Activated CD4-positive, alpha-beta memory T cell treated with anti-CD3 and anti-CD28 coated beads, Interleukin-2, amount 10 ng/mL, durations not matched to agents 7 days and 5 days (primary cell): ENCODE measurements at regions of chr18 and their contacts with region 1.

Region 1: GRCh38 chr18:2932247-2933181 is 80.4 kb downstream of the LPIN2 start:
- DNase-seq: peak; percentile 36
- H3K4me3 Mint-ChIP-seq: no peak overlapping the region
- H3K27ac Mint-ChIP-seq: peak overlapping the region; percentile 20
- H3K4me1 Mint-ChIP-seq: peaks cover 28% of the 10 kb centered on the region
- H3K27me3 Mint-ChIP-seq: no peaks in the 10 kb centered on the region

Region 2: DNA sequence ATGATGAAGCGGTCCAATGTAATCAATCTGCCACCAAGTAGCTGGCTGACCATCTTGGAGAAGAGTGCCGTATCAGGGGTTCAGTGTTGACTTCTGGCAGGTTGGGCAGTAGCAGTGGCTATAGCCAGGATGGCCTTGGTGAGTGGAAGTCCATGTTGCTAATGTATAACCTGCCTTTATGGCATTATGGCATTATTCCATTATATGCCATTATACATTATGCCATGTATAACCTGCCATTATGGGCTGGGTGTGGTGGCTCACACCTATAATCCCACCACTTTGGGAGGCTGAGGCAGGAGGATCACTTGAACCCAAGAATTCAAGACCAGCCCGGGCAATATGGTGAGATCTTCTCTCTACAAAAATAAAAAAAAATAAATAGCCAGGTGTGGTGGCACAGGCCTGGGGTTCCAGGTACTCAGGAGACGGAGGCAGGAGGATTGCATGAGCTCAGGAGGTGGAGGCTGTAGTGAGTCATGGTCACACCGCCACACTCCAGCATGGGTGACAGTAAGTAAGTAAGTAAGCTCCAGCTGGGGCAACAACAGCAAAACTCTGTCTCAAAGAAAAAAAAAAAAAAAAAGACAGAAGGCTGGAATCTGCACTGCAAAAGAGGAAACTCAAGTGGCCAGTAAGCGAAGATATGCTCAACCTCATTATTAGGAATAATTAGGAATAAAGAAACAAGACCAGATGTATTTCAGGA is 110.1 kb before region 1 on chr18:
- CTCF ChIA-PET with region 1: no interaction called
- POLR2A ChIA-PET with region 1: no interaction called
- DNase-seq: no peak
- H3K4me3 Mint-ChIP-seq: no peak overlapping the region
- H3K27ac Mint-ChIP-seq: no peak overlapping the region
- H3K4me1 Mint-ChIP-seq: no peaks in the 10 kb centered on the region
- H3K27me3 Mint-ChIP-seq: peaks cover 5% of the 10 kb centered on the region

Region 3: DNA sequence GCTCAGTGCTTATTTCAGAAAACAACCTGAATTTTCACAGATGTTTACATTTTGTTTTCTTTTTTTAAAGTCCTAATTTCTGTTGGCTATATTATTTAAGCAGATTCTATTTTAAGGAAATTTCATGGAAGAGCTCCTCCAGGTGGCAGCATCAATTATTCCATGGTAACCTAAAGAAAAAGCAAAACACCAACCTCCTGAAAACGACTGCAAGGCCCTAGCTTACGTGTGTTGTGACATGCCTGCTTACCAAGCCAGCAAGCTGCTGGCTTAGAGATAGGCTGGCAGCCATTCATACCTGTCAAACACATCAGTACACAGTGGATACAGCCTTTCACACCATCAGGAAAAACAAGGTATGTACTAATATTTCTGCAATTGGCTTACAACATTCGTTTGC is 15.5 kb after region 1 on chr18:
- CTCF ChIA-PET with region 1: interaction called, 14 read pairs
- POLR2A ChIA-PET with region 1: interaction called, 4 read pairs
- DNase-seq: no peak
- H3K4me3 Mint-ChIP-seq: no peak overlapping the region
- H3K27ac Mint-ChIP-seq: no peak overlapping the region
- H3K4me1 Mint-ChIP-seq: peaks cover 29% of the 10 kb centered on the region
- H3K27me3 Mint-ChIP-seq: no peaks in the 10 kb centered on the region

Region 4: DNA sequence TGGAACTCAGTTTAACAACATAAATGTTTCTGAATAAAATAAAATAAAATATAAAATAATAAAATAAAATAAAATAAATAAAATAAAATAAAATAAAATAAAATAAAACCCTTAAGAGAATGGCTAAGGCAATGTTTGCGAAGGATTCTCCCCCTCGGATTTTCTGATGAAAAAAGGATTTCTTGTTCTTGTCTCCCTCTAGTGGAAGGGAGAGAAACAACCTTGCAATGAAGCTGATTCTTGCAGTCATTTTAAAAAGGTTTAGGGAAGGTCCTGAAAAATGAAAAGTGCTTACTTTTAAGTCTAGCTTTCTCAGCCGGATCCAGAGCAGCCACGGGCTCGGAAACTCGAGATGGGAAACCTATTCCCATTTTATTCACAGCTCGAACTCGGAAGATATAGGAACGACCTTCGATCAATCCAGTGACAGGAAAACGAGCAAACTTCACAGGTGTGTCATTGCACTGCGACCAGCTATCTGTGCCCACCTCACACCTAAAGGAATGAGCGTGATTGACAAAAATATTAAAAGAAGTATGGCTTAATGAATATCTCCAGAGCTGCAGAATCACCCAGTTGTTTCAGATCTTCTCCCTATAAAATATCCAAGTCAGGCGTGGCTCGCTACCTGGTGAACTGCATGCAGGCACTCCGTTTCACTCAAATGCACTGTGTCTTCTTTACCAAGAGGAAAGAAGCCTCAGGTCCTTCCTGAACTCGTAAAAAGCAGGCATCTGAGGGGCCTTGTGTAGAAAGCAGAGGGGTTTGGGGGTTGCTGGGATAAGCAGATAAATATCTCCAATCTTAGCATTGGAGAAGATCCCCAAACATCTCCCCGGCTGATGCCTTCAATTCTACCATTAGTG is 219.1 kb after region 1 on chr18:
- CTCF ChIA-PET with region 1: interaction called, 13 read pairs
- POLR2A ChIA-PET with region 1: no interaction called
- DNase-seq: no peak
- H3K4me3 Mint-ChIP-seq: no peak overlapping the region
- H3K27ac Mint-ChIP-seq: no peak overlapping the region
- H3K4me1 Mint-ChIP-seq: no peaks in the 10 kb centered on the region
- H3K27me3 Mint-ChIP-seq: peaks cover 11% of the 10 kb centered on the region